Activated CD8-positive, alpha-beta T cell treated with anti-CD3 and anti-CD28 coated beads, Interleukin-2, amount 10 ng/mL, durations not matched to agents 7 days and 5 days (primary cell): ENCODE measurements at regions of chr14 and their contacts with region 1.

Region 1: DNA sequence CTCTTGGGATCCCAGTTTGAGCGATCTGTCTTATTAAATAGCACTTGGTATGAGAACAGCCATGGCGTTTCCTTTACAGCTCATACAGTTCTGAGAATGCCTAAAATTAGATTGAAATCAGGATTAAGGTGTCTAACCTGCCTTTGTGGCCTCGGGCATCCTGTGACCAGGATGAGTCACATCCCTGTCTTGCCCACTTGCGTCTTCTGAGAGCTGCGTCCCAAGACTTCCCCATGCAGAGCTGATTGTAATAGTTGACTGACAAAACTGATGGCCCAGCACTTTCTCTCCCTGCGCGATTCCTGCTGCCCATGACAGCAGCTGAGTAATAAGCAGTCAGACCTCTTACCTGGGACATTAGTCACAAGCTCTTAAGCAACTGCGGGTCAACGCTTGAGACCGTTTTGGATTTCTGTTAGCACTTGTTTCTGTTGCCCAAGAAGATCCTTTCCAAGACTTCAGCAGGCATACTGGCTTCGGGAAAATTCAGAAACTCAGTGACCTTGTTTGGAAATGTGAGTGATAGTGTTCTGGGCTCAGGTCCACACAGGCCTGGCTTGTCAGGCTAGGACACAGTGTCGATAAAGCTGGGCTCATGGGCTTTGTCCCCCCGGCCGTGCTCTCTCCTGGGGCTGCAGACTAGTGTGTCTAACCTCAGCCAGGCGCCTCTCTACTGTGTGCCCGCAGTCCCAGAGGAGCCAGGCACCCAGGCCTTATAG is 169.9 kb upstream of the HIF1A start:
- DNase-seq: peak; percentile 78
- ATAC-seq: peak; percentile 80
- H3K4me3 Mint-ChIP-seq: peak overlapping the region; percentile 46
- H3K27ac Mint-ChIP-seq: peak overlapping the region; percentile 86
- H3K4me1 Mint-ChIP-seq: peaks cover 86% of the 10 kb centered on the region
- H3K27me3 Mint-ChIP-seq: no peaks in the 10 kb centered on the region

Region 2: GRCh38 chr14:61196792-61197191 is 328.7 kb before region 1 on chr14:
- CTCF ChIA-PET with region 1: no interaction called
- POLR2A ChIA-PET with region 1: no interaction called
- DNase-seq: no peak
- ATAC-seq: no peak
- H3K4me3 Mint-ChIP-seq: no peak overlapping the region
- H3K27ac Mint-ChIP-seq: no peak overlapping the region
- H3K4me1 Mint-ChIP-seq: no peaks in the 10 kb centered on the region
- H3K27me3 Mint-ChIP-seq: peaks cover 35% of the 10 kb centered on the region

Region 3: GRCh38 chr14:61503167-61503801 is 22.2 kb before region 1 on chr14:
- CTCF ChIA-PET with region 1: interaction called, 4 read pairs
- POLR2A ChIA-PET with region 1: interaction called, 12 read pairs
- DNase-seq: peak; percentile 66
- ATAC-seq: peak; percentile 82
- H3K4me3 Mint-ChIP-seq: peak overlapping the region; percentile 73
- H3K27ac Mint-ChIP-seq: peak overlapping the region; percentile 97
- H3K4me1 Mint-ChIP-seq: peaks cover 89% of the 10 kb centered on the region
- H3K27me3 Mint-ChIP-seq: no peaks in the 10 kb centered on the region

Region 4: GRCh38 chr14:61512026-61512834 is 13.2 kb before region 1 on chr14:
- CTCF ChIA-PET with region 1: interaction called, 14 read pairs
- POLR2A ChIA-PET with region 1: interaction called, 5 read pairs
- DNase-seq: no peak
- ATAC-seq: no peak
- H3K4me3 Mint-ChIP-seq: no peak overlapping the region
- H3K27ac Mint-ChIP-seq: peak overlapping the region; percentile 75
- H3K4me1 Mint-ChIP-seq: peaks cover 83% of the 10 kb centered on the region
- H3K27me3 Mint-ChIP-seq: no peaks in the 10 kb centered on the region

Region 5: DNA sequence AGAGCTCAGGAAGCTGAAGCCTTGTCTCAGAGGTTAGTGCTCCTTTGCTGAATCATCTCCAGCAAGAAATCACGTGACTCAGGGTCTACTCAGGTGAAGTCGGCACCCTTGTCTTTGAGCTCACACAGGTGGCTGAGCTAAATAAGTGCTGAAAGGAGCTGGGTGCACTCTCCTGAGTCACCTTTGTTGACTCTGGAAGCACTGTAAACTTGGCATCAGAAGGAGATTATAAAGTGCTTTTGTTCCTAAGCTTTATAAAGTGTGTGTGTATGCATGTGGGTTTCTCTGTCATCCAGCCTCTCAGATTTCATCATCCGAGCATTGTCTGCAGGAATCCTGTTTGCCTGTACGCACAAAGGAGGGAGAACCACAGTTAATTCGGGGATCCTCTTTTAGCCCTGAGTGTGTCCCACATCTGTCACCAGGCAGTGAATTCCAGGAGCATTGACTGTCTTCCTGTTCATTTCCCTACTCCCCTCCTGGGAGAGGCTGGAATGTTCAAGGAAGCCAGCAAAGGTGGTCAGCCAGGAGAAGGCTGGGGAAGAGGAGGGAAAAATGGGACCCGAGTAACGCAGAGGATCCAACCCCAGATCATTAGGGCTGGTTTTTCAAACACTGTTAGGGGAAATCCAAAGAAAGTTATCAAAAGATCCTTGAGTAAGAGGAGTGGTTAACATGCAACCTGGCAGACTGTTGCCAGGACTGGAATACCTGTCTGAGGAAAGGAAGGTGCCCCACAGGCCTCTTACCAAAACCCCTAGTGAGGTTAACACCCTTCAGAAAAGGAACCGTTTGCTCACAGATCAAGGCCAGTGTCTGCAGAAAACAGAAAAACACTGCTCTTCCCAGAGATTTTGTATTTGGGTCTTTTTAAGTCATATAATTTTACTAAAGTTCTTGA is 12.4 kb after region 1 on chr14:
- CTCF ChIA-PET with region 1: interaction called, 10 read pairs
- POLR2A ChIA-PET with region 1: no interaction called
- DNase-seq: no peak
- ATAC-seq: peak; percentile 24
- H3K4me3 Mint-ChIP-seq: no peak overlapping the region
- H3K27ac Mint-ChIP-seq: peak overlapping the region; percentile 70
- H3K4me1 Mint-ChIP-seq: peaks cover 65% of the 10 kb centered on the region
- H3K27me3 Mint-ChIP-seq: no peaks in the 10 kb centered on the region

Region 6: GRCh38 chr14:61581955-61582615 is 56.6 kb after region 1 on chr14:
- CTCF ChIA-PET with region 1: no interaction called
- POLR2A ChIA-PET with region 1: no interaction called
- DNase-seq: no peak
- ATAC-seq: no peak
- H3K4me3 Mint-ChIP-seq: no peak overlapping the region
- H3K27ac Mint-ChIP-seq: no peak overlapping the region
- H3K4me1 Mint-ChIP-seq: peaks cover 35% of the 10 kb centered on the region
- H3K27me3 Mint-ChIP-seq: peaks cover 2% of the 10 kb centered on the region